ENCODE measurements at regions of chr1 and their contacts with region 1.

Region 1: DNA sequence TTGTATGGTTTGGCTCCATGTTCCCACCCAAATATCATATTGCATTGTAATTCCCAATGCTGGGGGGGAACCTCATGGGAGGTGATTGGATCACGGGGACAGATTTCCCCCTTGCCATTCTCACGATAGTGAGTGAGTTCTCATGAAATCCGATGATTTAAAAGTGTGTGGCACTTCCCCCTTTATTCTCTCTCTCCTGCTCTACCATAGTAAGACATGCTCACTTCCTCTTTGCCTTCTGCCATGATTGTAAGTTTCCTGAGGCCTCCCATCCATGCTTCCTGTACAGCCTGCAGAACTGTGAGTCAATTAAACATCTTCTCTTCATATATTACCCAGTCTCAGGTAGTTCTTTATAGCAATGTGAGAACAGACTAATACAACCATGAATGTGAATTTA is 211.6 kb upstream of the NR5A2 start:
- DNase-seq: no peak
- H3K4me3 ChIP-seq: no peak overlapping the region
- H3K27ac ChIP-seq: no peak overlapping the region
- H3K4me1 ChIP-seq: no peaks in the 10 kb centered on the region
- H3K27me3 ChIP-seq: peaks cover 0 to 2% of the 10 kb centered on the region in 2 experiments
- CTCF ChIP-seq: no peak
- POLR2A ChIP-seq: no peak

Region 2: DNA sequence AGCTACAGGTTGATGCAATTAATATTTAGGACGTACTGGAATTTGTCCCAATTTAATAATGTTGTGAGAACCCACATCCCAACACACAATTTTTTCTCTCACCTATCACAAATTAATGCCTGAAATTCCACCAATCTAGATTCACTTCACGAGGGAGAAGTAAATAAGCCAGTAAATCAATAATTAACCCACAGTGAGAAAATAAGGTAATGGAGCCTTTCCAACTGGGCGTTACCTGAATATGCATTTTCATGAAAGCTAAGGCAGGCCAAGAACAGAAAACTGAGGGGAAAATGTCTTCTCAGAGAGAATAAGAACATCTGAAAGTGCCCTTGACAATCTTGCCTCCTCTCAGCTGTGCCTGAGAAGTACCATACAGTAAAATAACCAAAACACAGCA is 29.3 kb before region 1 on chr1:
- CTCF ChIA-PET with region 1: interaction called, 3 read pairs
- POLR2A ChIA-PET with region 1: no interaction called
- dilution Hi-C with region 1: no loop called
- intact Hi-C with region 1: loop called (anchors 2 kb)
- DNase-seq: no peak
- H3K4me3 ChIP-seq: no peak overlapping the region
- H3K27ac ChIP-seq: no peak overlapping the region
- H3K4me1 ChIP-seq: peaks cover 27% of the 10 kb centered on the region
- H3K27me3 ChIP-seq: no peaks in the 10 kb centered on the region
- CTCF ChIP-seq: no peak
- POLR2A ChIP-seq: no peak

Region 3: GRCh38 chr1:200795156-200795555 is 979.2 kb after region 1 on chr1:
- CTCF ChIA-PET with region 1: no interaction called
- POLR2A ChIA-PET with region 1: no interaction called
- dilution Hi-C with region 1: no loop called
- intact Hi-C with region 1: no loop called
- DNase-seq: peak; percentile 52
- H3K4me3 ChIP-seq: no peak overlapping the region
- H3K27ac ChIP-seq: no peak overlapping the region
- H3K4me1 ChIP-seq: peaks cover 6% of the 10 kb centered on the region
- H3K27me3 ChIP-seq: no peaks in the 10 kb centered on the region
- CTCF ChIP-seq: no peak
- POLR2A ChIP-seq: no peak